Esophagus muscularis mucosa (tissue), 4 donors: ENCODE measurements at regions of chr4 and their contacts with region 1.

Region 1: DNA sequence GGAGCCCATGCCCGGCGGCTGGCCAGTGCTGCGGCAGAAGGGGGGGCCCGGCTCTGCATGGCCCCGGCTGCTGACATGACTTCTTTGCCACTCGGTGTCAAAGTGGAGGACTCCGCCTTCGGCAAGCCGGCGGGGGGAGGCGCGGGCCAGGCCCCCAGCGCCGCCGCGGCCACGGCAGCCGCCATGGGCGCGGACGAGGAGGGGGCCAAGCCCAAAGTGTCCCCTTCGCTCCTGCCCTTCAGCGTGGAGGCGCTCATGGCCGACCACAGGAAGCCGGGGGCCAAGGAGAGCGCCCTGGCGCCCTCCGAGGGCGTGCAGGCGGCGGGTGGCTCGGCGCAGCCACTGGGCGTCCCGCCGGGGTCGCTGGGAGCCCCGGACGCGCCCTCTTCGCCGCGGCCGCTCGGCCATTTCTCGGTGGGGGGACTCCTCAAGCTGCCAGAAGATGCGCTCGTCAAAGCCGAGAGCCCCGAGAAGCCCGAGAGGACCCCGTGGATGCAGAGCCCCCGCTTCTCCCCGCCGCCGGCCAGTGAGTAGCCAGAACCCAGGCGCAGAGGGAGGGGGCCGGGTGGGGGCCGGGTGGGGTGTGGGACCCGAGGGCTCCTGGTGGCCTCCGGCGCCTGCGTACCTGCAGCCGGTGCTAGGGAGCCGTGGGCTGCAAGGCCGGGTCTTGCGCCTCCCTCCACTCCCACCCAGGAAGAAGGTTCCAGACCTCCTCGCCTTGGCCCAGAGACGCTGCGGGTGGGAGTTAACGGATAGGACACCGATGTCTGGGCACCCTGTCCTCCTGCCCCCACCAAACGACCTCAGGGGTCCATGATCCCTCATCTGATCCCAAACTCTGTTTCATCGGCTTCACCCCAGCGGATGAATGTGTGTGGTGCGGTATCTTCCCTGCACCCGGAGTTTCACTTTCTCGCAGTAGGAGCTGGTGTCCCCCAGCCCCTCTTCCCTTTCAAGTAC is 658 bp downstream of the MSX1 start:
- DNase-seq: no peak
- H3K4me3 ChIP-seq: peak overlapping the region; percentile 60 to 76 (median 70)
- H3K27ac ChIP-seq: peak overlapping the region; percentile 30 to 70 (median 50)
- H3K4me1 ChIP-seq: peaks cover 45 to 84% (median 66%) of the 10 kb centered on the region in 4 donors
- H3K27me3 ChIP-seq: peaks cover 8 to 100% (median 84%) of the 10 kb centered on the region in 4 donors
- CTCF ChIP-seq: no peak
- EP300 ChIP-seq: no peak
- POLR2A ChIP-seq: no peak

Region 2: DNA sequence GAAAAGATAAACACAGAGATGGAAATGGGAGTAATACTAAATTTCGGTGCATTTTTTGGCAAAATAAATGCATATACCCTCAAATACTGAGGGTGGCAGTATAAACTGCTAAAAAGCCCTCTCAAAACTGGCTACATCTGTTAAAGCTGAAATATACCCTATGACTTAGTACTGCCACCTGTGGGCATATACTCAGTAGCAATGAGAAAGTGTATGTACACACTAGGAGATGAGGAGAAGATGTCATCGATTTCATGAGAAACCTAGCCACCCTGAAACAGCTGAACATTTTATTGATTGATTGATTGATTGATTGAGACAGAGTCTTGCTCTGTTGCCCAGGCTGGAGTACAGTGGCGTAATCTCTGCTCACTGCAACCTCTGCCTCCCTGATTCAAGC is 599.9 kb before region 1 on chr4:
- intact Hi-C with region 1: loop called (anchors 5 kb)
- DNase-seq: no peak
- H3K4me3 ChIP-seq: no peak overlapping the region
- H3K27ac ChIP-seq: no peak overlapping the region
- H3K4me1 ChIP-seq: no peaks in the 10 kb centered on the region
- H3K27me3 ChIP-seq: peaks cover 0 to under 1% (median 0%) of the 10 kb centered on the region in 4 donors
- CTCF ChIP-seq: peak in 1 of 3 experiments; percentile 9
- EP300 ChIP-seq: no peak
- POLR2A ChIP-seq: no peak